Aorta (tissue), 5 donors: ENCODE measurements at regions of chr11 and their contacts with region 1.

Region 1: DNA sequence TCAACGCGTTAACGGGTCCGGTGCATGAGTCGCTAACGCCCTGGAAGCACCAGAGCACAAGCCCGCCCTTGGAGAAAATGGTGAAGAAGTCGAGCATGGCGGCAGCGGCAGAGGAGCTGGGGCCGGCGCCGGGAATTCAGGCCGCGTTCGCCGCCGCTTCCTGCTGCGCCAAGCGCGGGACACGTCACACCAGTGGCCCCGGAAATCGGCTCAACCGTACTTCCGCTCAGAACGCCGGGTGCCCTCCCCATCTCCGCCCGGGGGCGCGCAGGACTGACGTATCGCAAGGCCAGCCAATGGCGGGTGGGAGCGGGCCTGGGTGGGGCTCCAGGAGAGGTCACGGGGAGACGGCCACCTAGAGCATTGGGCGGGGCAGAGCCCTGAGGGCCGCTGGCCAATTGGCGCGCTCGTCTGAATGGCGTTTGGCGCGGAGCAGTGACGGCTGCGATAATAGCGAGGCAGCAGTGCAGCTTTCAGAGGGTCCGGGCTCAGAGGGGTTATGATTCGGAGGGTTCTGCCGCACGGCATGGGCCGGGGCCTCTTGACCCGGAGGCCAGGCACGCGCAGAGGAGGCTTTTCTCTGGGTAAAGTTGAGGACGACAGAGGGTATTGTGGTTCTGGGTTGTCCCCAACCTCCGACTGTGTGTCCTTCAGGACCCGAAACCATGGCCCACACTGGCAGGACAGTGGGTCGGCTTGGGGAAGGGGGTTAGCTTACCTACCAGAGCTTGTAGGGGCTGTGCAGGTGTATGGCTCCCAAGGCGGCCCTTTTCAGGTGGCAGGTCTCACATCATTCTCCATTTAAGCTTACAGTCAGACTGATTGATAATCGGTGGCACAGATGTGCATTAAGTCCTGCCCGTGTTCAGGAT is at the starts of genes FOXRED1 and SRPRA:
- DNase-seq: peak; percentile 100
- ATAC-seq: peak; percentile 100
- H3K4me3 ChIP-seq: peak within 1 kb of the TSS; percentile 86 to 93
- H3K27ac ChIP-seq: peak within 1 kb of the TSS in 1 of 2 donors; percentile 77
- H3K4me1 ChIP-seq: peaks cover 0 to 5% of the 10 kb centered on the region in 2 donors
- H3K27me3 ChIP-seq: no peaks in the 10 kb centered on the region
- total RNA-seq, gene FOXRED1: 19.9 to 25.4 TPM
- total RNA-seq, gene SRPRA: 103 to 104 TPM

Region 2: DNA sequence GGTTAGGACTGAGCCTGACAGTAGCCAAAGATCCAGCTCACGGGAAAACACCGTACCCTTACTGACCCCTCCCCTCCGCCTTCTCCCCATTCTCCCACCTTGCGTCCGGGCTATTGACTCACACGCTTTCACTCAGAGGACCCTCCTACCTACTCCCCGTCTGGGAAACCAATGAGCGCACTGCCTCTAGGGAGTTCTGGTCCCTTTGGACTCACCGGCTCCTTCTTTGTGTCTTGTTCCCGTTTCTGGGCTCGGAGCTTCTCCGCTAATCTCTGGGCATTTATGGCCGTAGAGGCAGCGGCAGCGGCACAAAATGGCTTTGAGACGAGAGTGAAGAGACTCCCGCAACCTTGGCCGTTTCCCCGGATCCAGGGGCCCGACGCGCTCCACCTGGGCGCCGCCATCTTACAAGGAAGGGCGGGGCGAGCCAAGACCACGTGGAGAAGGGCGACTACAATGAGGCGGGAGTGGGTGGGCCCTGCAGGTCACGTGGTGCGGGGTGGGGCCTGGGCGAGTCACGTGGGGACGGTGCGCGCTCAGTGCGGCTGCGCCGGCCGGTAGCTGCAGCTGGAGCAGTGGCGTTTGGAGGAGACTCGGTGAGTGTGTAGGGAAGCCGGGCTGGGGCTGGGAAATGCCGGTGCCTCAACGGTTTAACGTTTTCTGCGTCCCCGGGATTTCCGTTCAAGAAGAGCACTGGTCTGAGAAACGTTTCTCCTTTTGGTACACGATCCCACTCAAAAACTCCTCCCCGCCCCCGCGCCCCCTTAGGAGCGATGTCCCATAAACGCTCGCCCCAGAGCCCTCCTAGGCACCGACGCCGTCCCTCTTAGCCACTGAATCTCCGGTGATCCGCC is 57.5 kb before region 1 on chr11 and contains the starts of genes FAM118B and RPUSD4:
- intact Hi-C with region 1: loop called in 1 of 2 experiments (anchors 5 kb)
- DNase-seq: peak; percentile 99 to 100
- ATAC-seq: peak; percentile 100
- H3K4me3 ChIP-seq: peak within 1 kb of the TSS; percentile 73 to 75
- H3K27ac ChIP-seq: no peak within 1 kb of the TSS
- H3K4me1 ChIP-seq: peaks cover 0 to 6% of the 10 kb centered on the region in 2 donors
- H3K27me3 ChIP-seq: no peaks in the 10 kb centered on the region
- total RNA-seq, gene FAM118B: 14.1 to 21.9 TPM
- total RNA-seq, gene RPUSD4: 18.1 to 24.0 TPM

Region 3: GRCh38 chr11:126282736-126283591 is 14.0 kb after region 1 on chr11 and contains the start of gene TIRAP:
- intact Hi-C with region 1: loop called in 1 of 2 experiments (anchors 2 kb)
- DNase-seq: peak; percentile 84 to 88
- ATAC-seq: peak; percentile 94
- H3K4me3 ChIP-seq: peak within 1 kb of the TSS; percentile 70
- H3K27ac ChIP-seq: peak within 1 kb of the TSS; percentile 89 to 95
- H3K4me1 ChIP-seq: no peaks in the 10 kb centered on the region
- H3K27me3 ChIP-seq: no peaks in the 10 kb centered on the region
- total RNA-seq, gene TIRAP: 9.5 to 17.3 TPM

Region 4: GRCh38 chr11:126319374-126319740 is 50.4 kb after region 1 on chr11:
- intact Hi-C with region 1: no loop called
- DNase-seq: peak in 1 of 2 donors; percentile 31
- ATAC-seq: no peak
- H3K4me3 ChIP-seq: no peak overlapping the region
- H3K27ac ChIP-seq: no peak overlapping the region
- H3K4me1 ChIP-seq: no peaks in the 10 kb centered on the region
- H3K27me3 ChIP-seq: no peaks in the 10 kb centered on the region

Region 5: GRCh38 chr11:126776119-126776518 is 507.2 kb after region 1 on chr11:
- intact Hi-C with region 1: no loop called
- DNase-seq: no peak
- ATAC-seq: no peak
- H3K4me3 ChIP-seq: no peak overlapping the region
- H3K27ac ChIP-seq: no peak overlapping the region
- H3K4me1 ChIP-seq: no peaks in the 10 kb centered on the region
- H3K27me3 ChIP-seq: no peaks in the 10 kb centered on the region